ENCODE measurements at regions of chr16 and their contacts with region 1.

Region 1: DNA sequence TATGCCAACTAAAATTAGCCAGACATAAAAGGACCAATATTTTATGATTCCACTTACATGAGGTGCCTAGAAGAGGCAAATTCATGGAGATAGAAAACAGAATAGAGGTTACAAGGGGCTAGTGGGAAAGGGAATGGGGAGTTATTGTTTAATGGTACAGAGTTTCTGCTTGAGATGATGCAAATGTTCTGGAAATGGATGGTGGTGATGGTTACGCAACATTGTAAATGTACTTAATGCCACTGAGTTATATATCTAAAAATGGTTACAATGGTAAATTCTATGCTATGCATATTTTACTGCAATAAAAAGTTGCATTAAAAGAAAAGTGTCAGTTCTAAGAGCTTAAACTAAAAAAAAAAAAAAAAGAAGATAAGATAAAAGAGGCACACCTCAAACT is 17.9 kb downstream of the MT1X start:
- DNase-seq: no peak
- H3K4me3 ChIP-seq: no peak overlapping the region
- H3K27ac ChIP-seq: no peak overlapping the region
- H3K4me1 ChIP-seq: no peaks in the 10 kb centered on the region
- H3K27me3 ChIP-seq: no peaks in the 10 kb centered on the region
- CTCF ChIP-seq: no peak

Region 2: DNA sequence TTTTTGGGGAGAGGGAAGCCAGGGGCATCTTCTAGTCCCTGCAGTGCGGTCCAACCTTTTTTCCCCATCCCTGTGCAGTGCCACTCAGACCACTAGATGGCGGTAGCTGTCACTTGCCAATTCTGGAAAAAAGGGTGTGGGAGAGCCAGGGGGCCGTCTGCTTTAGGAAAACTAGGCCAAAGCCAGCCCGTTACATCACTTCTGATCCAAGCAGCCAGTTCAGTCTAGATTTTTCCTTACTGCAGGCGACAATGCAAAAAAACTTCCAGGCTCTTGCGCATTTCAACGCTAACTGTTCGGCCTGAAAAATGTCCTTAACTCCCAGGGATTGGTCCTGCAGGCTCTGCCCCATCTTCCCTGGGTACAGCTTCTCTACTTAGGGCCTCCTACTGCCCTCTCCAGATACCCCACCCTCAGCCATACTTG is 755.8 kb before region 1 on chr16:
- CTCF ChIA-PET with region 1: no interaction called
- POLR2A ChIA-PET with region 1: no interaction called
- intact Hi-C with region 1: loop called (anchors 5 kb)
- DNase-seq: peak; percentile 73
- H3K4me3 ChIP-seq: no peak overlapping the region
- H3K27ac ChIP-seq: no peak overlapping the region
- H3K4me1 ChIP-seq: no peaks in the 10 kb centered on the region
- H3K27me3 ChIP-seq: peaks cover 12% of the 10 kb centered on the region
- CTCF ChIP-seq: peak; percentile 91

Region 3: DNA sequence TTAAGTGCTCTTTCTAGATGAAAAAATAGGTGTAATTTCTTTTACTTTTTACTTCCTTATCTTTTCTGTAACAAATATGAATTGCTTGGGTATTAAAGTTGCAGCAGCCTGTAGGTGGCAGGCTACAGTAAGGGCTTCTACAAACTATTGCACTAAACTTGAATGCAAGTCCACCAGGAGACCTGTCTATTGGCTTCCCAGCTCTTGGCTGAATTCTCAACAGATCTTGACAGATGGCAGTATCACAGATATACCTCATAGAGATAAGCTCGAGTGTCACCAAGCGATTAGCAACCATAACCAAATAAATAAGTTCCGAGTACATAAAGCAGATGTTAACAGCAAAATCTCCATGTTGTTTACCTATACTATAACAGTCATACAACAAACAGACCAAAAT is 186.2 kb before region 1 on chr16:
- CTCF ChIA-PET with region 1: interaction called, 9 read pairs
- POLR2A ChIA-PET with region 1: no interaction called
- intact Hi-C with region 1: loop called (anchors 2 kb)
- DNase-seq: peak; percentile 68
- H3K4me3 ChIP-seq: no peak overlapping the region
- H3K27ac ChIP-seq: no peak overlapping the region
- H3K4me1 ChIP-seq: no peaks in the 10 kb centered on the region
- H3K27me3 ChIP-seq: no peaks in the 10 kb centered on the region
- CTCF ChIP-seq: peak; percentile 74

Region 4: DNA sequence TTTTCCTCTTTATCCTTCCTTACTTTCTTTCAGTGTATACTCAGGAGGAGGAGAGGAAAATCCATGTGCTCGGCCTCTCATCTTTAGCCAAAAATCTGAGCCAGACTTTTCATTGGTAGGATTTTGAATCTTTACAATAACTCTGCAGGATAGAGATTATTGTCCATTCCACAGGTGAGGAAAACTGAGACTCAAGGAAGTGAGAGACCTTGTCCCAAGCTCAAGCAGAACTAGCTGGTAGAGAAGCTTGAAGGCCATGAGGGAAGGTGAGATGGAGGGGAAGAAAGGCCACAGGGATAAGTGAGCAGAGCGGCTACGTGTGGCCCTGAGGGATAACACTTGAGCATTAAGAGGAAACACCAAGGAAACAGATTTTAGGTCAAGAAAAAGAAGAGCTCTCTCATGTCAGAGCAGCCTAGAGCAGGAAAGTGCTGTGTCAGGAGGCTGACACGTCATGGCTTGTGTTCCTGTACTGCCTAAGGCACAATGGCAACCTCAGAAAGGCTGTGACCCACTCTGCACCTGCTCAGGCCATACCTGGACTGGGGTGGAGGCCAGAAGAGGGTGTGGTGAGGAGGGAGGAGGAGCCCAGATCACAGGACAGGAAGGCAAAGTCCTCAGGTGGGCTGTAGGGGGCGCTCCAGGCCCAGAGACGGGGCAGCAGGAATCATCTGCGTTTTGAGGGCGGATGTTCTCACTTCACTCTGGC is 123.5 kb before region 1 on chr16:
- CTCF ChIA-PET with region 1: interaction called, 10 read pairs
- POLR2A ChIA-PET with region 1: no interaction called
- intact Hi-C with region 1: loop called (anchors 1 kb)
- DNase-seq: peak; percentile 73
- H3K4me3 ChIP-seq: no peak overlapping the region
- H3K27ac ChIP-seq: no peak overlapping the region
- H3K4me1 ChIP-seq: no peaks in the 10 kb centered on the region
- H3K27me3 ChIP-seq: no peaks in the 10 kb centered on the region
- CTCF ChIP-seq: peak; percentile 84

Region 5: GRCh38 chr16:56600398-56600999 is 99.7 kb before region 1 on chr16:
- CTCF ChIA-PET with region 1: interaction called, 30 read pairs
- POLR2A ChIA-PET with region 1: no interaction called
- intact Hi-C with region 1: loop called (anchors 5 kb)
- DNase-seq: peak; percentile 69
- H3K4me3 ChIP-seq: no peak overlapping the region
- H3K27ac ChIP-seq: no peak overlapping the region
- H3K4me1 ChIP-seq: no peaks in the 10 kb centered on the region
- H3K27me3 ChIP-seq: no peaks in the 10 kb centered on the region
- CTCF ChIP-seq: peak; percentile 77

Region 6: GRCh38 chr16:56651586-56651985 is 48.6 kb before region 1 on chr16 and contains the start of gene MT1B:
- CTCF ChIA-PET with region 1: no interaction called
- POLR2A ChIA-PET with region 1: no interaction called
- intact Hi-C with region 1: no loop called
- DNase-seq: no peak
- H3K4me3 ChIP-seq: no peak within 1 kb of the TSS
- H3K27ac ChIP-seq: no peak within 1 kb of the TSS
- H3K4me1 ChIP-seq: no peaks in the 10 kb centered on the region
- H3K27me3 ChIP-seq: peaks cover 3% of the 10 kb centered on the region
- CTCF ChIP-seq: no peak
- total RNA-seq, gene MT1B: not detected in 2 replicates

Region 7: DNA sequence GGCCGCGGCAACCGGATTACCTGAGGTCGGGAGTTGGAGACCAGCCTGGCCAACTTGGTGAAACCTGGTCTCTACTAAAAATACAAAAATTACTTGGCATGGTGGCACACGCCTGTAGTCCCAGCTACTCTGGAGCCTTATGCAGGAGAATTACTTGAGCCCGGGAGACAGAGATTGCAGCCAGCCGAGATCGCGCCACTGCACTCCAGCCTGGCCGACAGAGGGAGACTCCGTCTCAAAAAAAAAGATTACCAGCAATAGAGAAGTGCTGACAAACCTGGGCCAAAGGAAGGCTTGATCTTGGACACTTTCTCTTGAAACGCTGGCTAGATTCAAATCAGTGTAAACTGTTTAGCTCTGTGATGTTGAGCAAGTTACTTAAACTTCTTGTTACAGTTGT is 26.3 kb before region 1 on chr16:
- CTCF ChIA-PET with region 1: interaction called, 7 read pairs
- POLR2A ChIA-PET with region 1: no interaction called
- intact Hi-C with region 1: loop called (anchors 1 kb)
- DNase-seq: no peak
- H3K4me3 ChIP-seq: no peak overlapping the region
- H3K27ac ChIP-seq: no peak overlapping the region
- H3K4me1 ChIP-seq: no peaks in the 10 kb centered on the region
- H3K27me3 ChIP-seq: peaks cover 12% of the 10 kb centered on the region
- CTCF ChIP-seq: peak; percentile 56

Measured in A673 (cell line).